ENCODE measurements at regions of chr14 and their contacts with region 1.

Region 1: GRCh38 chr14:95527387-95528002 is 7.4 kb upstream of the GLRX5 start:
- DNase-seq: no peak
- H3K4me3 ChIP-seq: peak overlapping the region in 1 of 3 experiments; percentile 4
- H3K27ac ChIP-seq: peak overlapping the region; percentile 72
- H3K4me1 ChIP-seq: peaks cover 53% of the 10 kb centered on the region
- H3K27me3 ChIP-seq: no peaks in the 10 kb centered on the region
- CTCF ChIP-seq: peak; percentile 60 to 63
- POLR2A ChIP-seq: no peak

Region 2: DNA sequence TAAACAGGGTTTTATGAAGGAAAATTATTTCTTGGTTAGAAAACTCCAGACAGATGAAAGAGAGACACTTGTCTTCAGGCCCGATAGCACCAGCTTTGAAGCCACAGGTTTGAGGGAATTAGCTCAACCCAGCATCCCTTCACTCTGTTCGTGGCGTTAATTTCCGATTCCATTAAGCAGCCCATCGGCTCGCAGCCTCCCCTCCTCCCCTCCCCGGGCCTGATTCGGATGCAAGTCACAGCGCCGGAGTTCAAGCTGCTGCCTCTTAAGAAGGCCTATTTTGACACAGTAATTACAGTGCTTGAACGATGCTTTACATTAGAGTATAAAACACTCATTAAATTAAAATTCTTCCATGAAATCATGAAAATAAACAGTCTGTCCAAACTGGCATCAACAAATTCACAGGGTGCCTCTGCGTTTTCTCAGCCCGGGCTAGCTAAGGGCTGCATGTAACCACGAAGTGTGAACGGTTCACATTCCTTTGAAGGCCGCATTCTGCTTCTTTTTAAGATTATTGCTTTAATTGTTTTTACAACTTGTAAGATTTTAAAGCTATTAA is 516.0 kb before region 1 on chr14:
- CTCF ChIA-PET with region 1: no interaction called
- POLR2A ChIA-PET with region 1: no interaction called
- dilution Hi-C with region 1: no loop called
- intact Hi-C with region 1: no loop called
- DNase-seq: no peak
- H3K4me3 ChIP-seq: no peak overlapping the region
- H3K27ac ChIP-seq: no peak overlapping the region
- H3K4me1 ChIP-seq: no peaks in the 10 kb centered on the region
- H3K27me3 ChIP-seq: no peaks in the 10 kb centered on the region
- CTCF ChIP-seq: no peak
- POLR2A ChIP-seq: no peak

Region 3: GRCh38 chr14:95431199-95432143 is 96.0 kb before region 1 on chr14:
- CTCF ChIA-PET with region 1: interaction called, 11 read pairs
- POLR2A ChIA-PET with region 1: no interaction called
- dilution Hi-C with region 1: no loop called
- intact Hi-C with region 1: loop called (anchors 1 kb)
- DNase-seq: peak; percentile 27
- H3K4me3 ChIP-seq: no peak overlapping the region
- H3K27ac ChIP-seq: no peak overlapping the region
- H3K4me1 ChIP-seq: no peaks in the 10 kb centered on the region
- H3K27me3 ChIP-seq: no peaks in the 10 kb centered on the region
- CTCF ChIP-seq: peak; percentile 40 to 50
- POLR2A ChIP-seq: no peak

Region 4: GRCh38 chr14:95460647-95461478 is 66.6 kb before region 1 on chr14:
- CTCF ChIA-PET with region 1: interaction called, 35 read pairs
- POLR2A ChIA-PET with region 1: no interaction called
- dilution Hi-C with region 1: no loop called
- intact Hi-C with region 1: loop called (anchors 5 kb)
- DNase-seq: peak; percentile 52
- H3K4me3 ChIP-seq: no peak overlapping the region
- H3K27ac ChIP-seq: no peak overlapping the region
- H3K4me1 ChIP-seq: peaks cover 24% of the 10 kb centered on the region
- H3K27me3 ChIP-seq: no peaks in the 10 kb centered on the region
- CTCF ChIP-seq: no peak
- POLR2A ChIP-seq: no peak

Region 5: DNA sequence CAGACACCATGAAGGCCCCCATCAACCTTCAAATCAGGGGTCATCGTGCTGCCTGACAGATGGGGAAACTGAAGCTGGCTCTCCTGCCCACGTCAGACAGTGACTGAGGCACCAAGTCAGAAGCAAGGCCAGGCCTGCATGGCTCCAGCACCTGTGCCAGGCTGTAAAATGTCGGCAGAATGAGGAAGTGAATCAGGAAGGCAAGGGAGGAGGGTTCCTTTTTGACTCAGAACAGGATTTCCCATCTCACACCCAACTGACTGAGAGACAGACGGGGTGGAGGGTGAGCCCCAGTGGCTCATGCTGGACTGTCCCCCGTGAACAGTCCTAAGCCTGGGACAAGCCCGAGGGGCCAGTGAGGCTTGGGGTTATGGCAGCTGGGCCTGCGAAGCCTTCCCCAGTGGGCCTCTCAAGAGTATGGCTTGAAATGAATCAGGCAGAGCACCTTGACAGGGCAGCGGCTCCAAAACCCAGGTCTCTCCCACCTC is 31.9 kb before region 1 on chr14:
- CTCF ChIA-PET with region 1: interaction called, 18 read pairs
- POLR2A ChIA-PET with region 1: no interaction called
- dilution Hi-C with region 1: no loop called
- intact Hi-C with region 1: no loop called
- DNase-seq: peak; percentile 68
- H3K4me3 ChIP-seq: no peak overlapping the region
- H3K27ac ChIP-seq: peak overlapping the region; percentile 57
- H3K4me1 ChIP-seq: peaks cover 27% of the 10 kb centered on the region
- H3K27me3 ChIP-seq: no peaks in the 10 kb centered on the region
- CTCF ChIP-seq: no peak
- POLR2A ChIP-seq: no peak

Region 6: GRCh38 chr14:95507701-95508103 is 19.8 kb before region 1 on chr14:
- CTCF ChIA-PET with region 1: interaction called, 79 read pairs
- POLR2A ChIA-PET with region 1: interaction called, 3 read pairs
- dilution Hi-C with region 1: no loop called
- intact Hi-C with region 1: loop called (anchors 1 kb)
- DNase-seq: peak; percentile 83
- H3K4me3 ChIP-seq: no peak overlapping the region
- H3K27ac ChIP-seq: peak overlapping the region; percentile 88
- H3K4me1 ChIP-seq: peaks cover 28% of the 10 kb centered on the region
- H3K27me3 ChIP-seq: no peaks in the 10 kb centered on the region
- CTCF ChIP-seq: no peak
- POLR2A ChIP-seq: no peak

Region 7: GRCh38 chr14:95545179-95546168 is 18.0 kb after region 1 on chr14:
- CTCF ChIA-PET with region 1: interaction called, 14 read pairs
- POLR2A ChIA-PET with region 1: no interaction called
- dilution Hi-C with region 1: no loop called
- intact Hi-C with region 1: no loop called
- DNase-seq: peak; percentile 82
- H3K4me3 ChIP-seq: peak overlapping the region in 1 of 3 experiments; percentile 16
- H3K27ac ChIP-seq: peak overlapping the region; percentile 72
- H3K4me1 ChIP-seq: peaks cover 40% of the 10 kb centered on the region
- H3K27me3 ChIP-seq: no peaks in the 10 kb centered on the region
- CTCF ChIP-seq: no peak
- POLR2A ChIP-seq: no peak

Region 8: GRCh38 chr14:95585953-95586620 is 58.6 kb after region 1 on chr14:
- CTCF ChIA-PET with region 1: no interaction called
- POLR2A ChIA-PET with region 1: no interaction called
- dilution Hi-C with region 1: no loop called
- intact Hi-C with region 1: no loop called
- DNase-seq: no peak
- H3K4me3 ChIP-seq: no peak overlapping the region
- H3K27ac ChIP-seq: no peak overlapping the region
- H3K4me1 ChIP-seq: no peaks in the 10 kb centered on the region
- H3K27me3 ChIP-seq: no peaks in the 10 kb centered on the region
- CTCF ChIP-seq: no peak
- POLR2A ChIP-seq: no peak